SK-N-SH (cell line): ENCODE measurements at regions of chr5 and their contacts with region 1.

Region 1: DNA sequence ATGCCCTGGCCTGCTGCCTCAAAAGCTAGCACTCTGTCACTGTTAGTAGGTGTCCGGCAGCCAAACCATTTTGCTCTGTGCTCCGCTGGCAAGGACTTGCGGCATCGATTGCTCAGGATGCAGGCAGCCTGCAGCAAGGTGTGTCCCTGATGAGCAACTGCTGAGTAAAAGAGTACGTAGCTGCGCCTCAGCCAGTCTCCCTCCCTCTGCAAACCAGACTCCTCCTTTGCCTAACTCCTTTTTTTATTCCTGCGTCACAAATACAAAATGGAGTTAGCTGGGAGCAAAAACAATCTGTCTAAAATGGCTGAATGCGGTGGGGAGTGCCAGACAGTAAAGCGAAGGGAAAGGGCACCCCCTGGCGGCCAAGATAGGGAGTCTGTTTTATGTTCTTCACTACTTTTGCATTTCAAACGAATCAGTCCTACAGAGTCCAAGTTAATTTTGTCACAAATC is 61.1 kb downstream of the DIAPH1 start:
- DNase-seq: peak; percentile 69
- H3K4me3 ChIP-seq: peak overlapping the region; percentile 34 to 39; a peak in 3 of 4 replicates
- H3K27ac ChIP-seq: peak overlapping the region; percentile 91 to 100
- H3K4me1 ChIP-seq: peaks cover 21 to 23% of the 10 kb centered on the region in 2 experiments; a peak in 3 of 4 replicates
- H3K27me3 ChIP-seq: no peaks in the 10 kb centered on the region
- CTCF ChIP-seq: peak; percentile 93
- EP300 ChIP-seq: peak; percentile 28 to 48; a peak in 3 of 4 replicates
- RAD21 ChIP-seq: peak; percentile 96

Region 2: DNA sequence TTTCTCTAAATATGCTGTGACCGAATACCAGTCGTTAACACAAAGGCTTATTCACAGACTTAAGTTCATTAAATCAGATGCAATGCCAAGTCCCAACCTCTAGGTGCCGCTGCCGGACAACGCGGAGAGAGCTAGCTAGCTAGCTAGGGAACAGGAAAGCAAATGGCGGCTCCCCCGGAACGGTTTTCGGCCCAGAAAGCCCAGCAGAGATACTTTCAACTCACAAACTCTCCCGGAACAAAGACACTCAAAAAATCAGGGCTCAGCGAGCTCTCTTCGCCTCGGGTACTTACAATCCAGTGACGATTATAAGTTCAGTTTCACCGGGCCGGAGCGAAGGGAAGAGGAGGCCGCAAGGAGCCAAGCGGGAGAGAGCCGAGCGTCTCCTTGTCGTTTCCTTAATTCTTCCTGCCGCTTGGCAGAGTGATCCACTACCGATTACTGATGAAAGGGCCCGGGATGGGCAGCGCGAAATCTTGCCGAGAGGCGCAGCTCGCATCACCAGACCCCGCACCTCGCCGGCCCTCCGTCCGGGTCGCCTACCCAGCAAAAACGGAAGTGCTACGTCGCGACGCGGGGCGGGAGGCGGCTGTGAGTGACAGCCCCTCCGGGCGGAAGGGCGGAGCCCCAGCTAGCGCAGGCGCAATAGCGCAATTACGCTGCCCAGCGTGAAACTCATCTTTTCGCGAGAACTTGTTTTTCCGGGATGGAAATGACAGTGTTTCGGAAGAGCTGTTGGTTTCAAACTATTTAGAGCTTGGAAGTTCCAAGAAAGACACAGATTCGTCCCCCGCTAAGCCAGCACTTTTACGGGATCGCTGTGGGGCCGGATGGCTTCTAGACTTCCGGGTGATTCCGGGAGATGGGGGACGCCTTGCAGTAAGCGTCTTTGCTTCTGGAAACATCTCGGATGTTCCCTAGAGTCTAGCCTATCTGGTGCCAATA is 237.2 kb before region 1 on chr5 and contains the start of gene TAF7:
- CTCF ChIA-PET with region 1: interaction called, 36 read pairs
- POLR2A ChIA-PET with region 1: interaction called, 16 read pairs
- DNase-seq: peak; percentile 94
- H3K4me3 ChIP-seq: peak within 1 kb of the TSS; percentile 80 to 92
- H3K27ac ChIP-seq: peak within 1 kb of the TSS; percentile 96 to 98
- H3K4me1 ChIP-seq: no peaks in the 10 kb centered on the region; a peak in 1 of 4 replicates
- H3K27me3 ChIP-seq: no peaks in the 10 kb centered on the region
- CTCF ChIP-seq: peak; percentile 90
- EP300 ChIP-seq: 0 out of 4 replicates have a peak, but pooled peaks of 1 of the 2 experiments have one; percentile 31
- RAD21 ChIP-seq: peak; percentile 60
- polyA plus RNA-seq, gene TAF7: 30.6 and 38.7 TPM in 2 replicates

Region 3: GRCh38 chr5:141359790-141360426 is 197.8 kb before region 1 on chr5 and contains the start of gene PCDHGB2:
- CTCF ChIA-PET with region 1: interaction called, 14 read pairs
- POLR2A ChIA-PET with region 1: interaction called, 3 read pairs
- DNase-seq: peak; percentile 62
- H3K4me3 ChIP-seq: peak within 1 kb of the TSS; percentile 33 to 42
- H3K27ac ChIP-seq: peak within 1 kb of the TSS; percentile 22 to 28; a peak in 2 of 4 replicates
- H3K4me1 ChIP-seq: no peaks in the 10 kb centered on the region
- H3K27me3 ChIP-seq: no peaks in the 10 kb centered on the region
- CTCF ChIP-seq: peak; percentile 54
- EP300 ChIP-seq: no peak
- RAD21 ChIP-seq: peak; percentile 65
- polyA plus RNA-seq, gene PCDHGB2: 3.7 and 4.5 TPM in 2 replicates

Region 4: GRCh38 chr5:141420855-141421496 is 136.7 kb before region 1 on chr5 and contains the start of gene PCDHGA11:
- CTCF ChIA-PET with region 1: interaction called, 44 read pairs
- POLR2A ChIA-PET with region 1: interaction called, 5 read pairs
- DNase-seq: no peak
- H3K4me3 ChIP-seq: peak within 1 kb of the TSS in 1 of 2 experiments; percentile 22; a peak in 1 of 4 replicates
- H3K27ac ChIP-seq: no peak within 1 kb of the TSS
- H3K4me1 ChIP-seq: no peaks in the 10 kb centered on the region; a peak in 1 of 4 replicates
- H3K27me3 ChIP-seq: no peaks in the 10 kb centered on the region
- CTCF ChIP-seq: no peak
- EP300 ChIP-seq: no peak
- RAD21 ChIP-seq: no peak
- polyA plus RNA-seq, gene PCDHGA11: 0.18 and 0.23 TPM in 2 replicates

Region 5: GRCh38 chr5:141512390-141512910 is 45.3 kb before region 1 on chr5:
- CTCF ChIA-PET with region 1: interaction called, 43 read pairs
- POLR2A ChIA-PET with region 1: interaction called, 16 read pairs
- DNase-seq: peak; percentile 69
- H3K4me3 ChIP-seq: peak overlapping the region in 1 of 2 experiments; percentile 33; a peak in 1 of 4 replicates
- H3K27ac ChIP-seq: peak overlapping the region; percentile 99 to 100
- H3K4me1 ChIP-seq: peaks cover 71 to 77% of the 10 kb centered on the region in 2 experiments
- H3K27me3 ChIP-seq: no peaks in the 10 kb centered on the region
- CTCF ChIP-seq: peak; percentile 88
- EP300 ChIP-seq: no peak
- RAD21 ChIP-seq: peak; percentile 18; the same call in 1 of the 2 replicates

Region 6: DNA sequence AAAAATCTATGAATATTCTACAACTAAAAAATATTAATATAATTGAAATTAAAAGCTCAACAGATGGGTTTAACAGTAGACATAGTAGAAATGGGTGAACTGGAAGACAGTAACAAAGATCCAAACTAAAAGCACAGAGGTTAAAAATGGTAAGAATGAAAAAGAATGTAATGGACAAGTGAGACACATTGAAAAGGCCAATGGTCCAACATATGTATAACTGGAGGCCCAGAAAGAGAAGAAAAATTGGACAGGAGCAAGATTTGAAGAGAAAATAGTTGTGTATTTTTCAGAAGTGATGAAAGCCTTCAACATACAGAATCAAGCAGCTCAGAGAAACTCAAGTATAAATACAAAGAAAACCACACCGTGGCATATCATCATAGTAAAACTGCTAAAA is 10.2 kb before region 1 on chr5:
- CTCF ChIA-PET with region 1: interaction called, 25 read pairs
- POLR2A ChIA-PET with region 1: no interaction called
- DNase-seq: no peak
- H3K4me3 ChIP-seq: no peak overlapping the region
- H3K27ac ChIP-seq: no peak overlapping the region
- H3K4me1 ChIP-seq: no peaks in the 10 kb centered on the region; a peak in 1 of 4 replicates
- H3K27me3 ChIP-seq: no peaks in the 10 kb centered on the region
- CTCF ChIP-seq: no peak
- EP300 ChIP-seq: no peak
- RAD21 ChIP-seq: no peak

Region 7: GRCh38 chr5:141598391-141599350 is 41.0 kb after region 1 on chr5:
- CTCF ChIA-PET with region 1: no interaction called
- POLR2A ChIA-PET with region 1: no interaction called
- DNase-seq: no peak
- H3K4me3 ChIP-seq: no peak overlapping the region
- H3K27ac ChIP-seq: peak overlapping the region in 1 of 2 experiments; percentile 9; a peak in 1 of 4 replicates
- H3K4me1 ChIP-seq: peaks cover 0 to 5% of the 10 kb centered on the region in 2 experiments; a peak in 1 of 4 replicates
- H3K27me3 ChIP-seq: no peaks in the 10 kb centered on the region
- CTCF ChIP-seq: no peak
- EP300 ChIP-seq: no peak
- RAD21 ChIP-seq: no peak